ENCODE measurements at regions of chr3 and their contacts with region 1.

Region 1: DNA sequence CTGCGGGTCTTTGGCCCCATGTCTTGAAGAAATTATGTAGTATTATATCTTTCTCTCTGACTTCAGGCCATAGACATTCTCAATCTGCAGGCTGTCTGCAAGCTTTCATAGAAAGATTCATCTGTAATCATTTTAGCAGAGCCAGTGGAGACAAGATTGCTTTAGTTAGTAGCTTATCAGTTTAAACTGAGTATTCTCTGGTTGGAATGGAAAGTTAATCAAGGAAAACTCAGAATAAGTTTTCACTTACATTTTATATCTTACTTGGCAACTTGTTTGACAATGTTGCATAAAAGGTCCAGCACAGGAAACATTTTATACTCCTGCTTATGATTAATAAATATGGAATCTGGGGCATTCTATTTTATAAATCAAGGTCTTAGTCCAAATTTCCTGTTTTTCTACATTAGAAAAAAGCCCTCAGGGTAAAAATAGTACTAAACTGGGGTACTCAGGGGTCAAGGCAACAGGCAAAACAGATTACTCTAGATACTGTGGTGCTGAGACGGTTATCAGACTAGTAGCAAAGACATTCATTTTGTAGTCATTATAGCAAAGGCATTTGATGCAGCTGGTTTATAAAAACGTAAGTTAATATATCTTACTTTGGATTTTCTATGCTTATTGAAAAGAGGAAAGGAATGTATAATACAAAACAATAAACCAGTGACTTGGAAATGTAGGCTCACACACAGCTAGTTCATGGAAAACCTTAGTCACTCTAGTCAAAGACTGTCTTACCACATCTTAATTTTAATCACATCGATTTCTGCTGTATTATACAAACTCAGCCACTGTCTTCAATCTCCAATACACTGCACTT is 45.2 kb upstream of the FILIP1L start:
- DNase-seq: no peak

Region 2: GRCh38 chr3:100073899-100074307 is 85.6 kb before region 1 on chr3:
- intact Hi-C with region 1: loop called (anchors 5 kb)
- DNase-seq: peak; percentile 76

Region 3: GRCh38 chr3:100124201-100124761 is 35.3 kb before region 1 on chr3:
- intact Hi-C with region 1: loop called (anchors 5 kb)
- DNase-seq: no peak

Region 4: DNA sequence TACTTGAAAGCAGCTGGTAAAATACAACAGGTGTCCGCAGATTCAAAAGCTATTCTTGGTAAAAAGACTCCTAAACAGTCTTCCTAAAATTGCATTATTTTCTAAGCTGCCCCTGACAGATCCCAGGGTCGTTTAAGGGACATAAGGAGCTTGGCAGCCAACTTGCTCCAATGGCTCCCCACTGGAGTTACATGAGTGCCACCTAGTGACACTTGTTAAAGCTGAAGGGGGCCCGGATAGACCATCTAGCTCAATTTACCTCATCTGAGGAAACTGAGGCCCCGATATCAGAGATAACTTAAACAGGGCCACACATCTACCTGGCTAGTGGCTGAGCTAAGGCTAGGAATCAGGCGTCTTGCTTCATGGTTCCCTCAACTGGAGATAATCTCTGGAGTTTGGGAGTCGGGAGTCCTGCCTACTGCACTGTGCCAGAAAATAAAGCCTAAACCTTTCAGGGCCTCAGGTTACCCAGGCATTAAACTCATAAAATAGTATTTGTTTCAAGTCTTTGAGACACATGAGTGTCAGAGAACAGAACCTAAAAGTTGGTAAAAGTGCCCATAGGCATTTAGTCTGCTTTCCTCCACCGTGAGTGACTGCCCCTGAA is 94.7 kb after region 1 on chr3:
- intact Hi-C with region 1: loop called (anchors 5 kb)
- DNase-seq: no peak

Region 5: GRCh38 chr3:100269410-100270217 is 110.1 kb after region 1 on chr3:
- intact Hi-C with region 1: no loop called
- DNase-seq: no peak

Measured in cardiac septum (tissue), 1 donor.